ENCODE measurements at regions of chr2 and their contacts with region 1.

Region 1: GRCh38 chr2:143279672-143280071 is 150.5 kb downstream of the ARHGAP15 start:
- DNase-seq: no peak
- ATAC-seq: no peak

Region 2: GRCh38 chr2:142825861-142826260 is 453.8 kb before region 1 on chr2:
- intact Hi-C with region 1: no loop called
- DNase-seq: no peak
- ATAC-seq: no peak

Region 3: DNA sequence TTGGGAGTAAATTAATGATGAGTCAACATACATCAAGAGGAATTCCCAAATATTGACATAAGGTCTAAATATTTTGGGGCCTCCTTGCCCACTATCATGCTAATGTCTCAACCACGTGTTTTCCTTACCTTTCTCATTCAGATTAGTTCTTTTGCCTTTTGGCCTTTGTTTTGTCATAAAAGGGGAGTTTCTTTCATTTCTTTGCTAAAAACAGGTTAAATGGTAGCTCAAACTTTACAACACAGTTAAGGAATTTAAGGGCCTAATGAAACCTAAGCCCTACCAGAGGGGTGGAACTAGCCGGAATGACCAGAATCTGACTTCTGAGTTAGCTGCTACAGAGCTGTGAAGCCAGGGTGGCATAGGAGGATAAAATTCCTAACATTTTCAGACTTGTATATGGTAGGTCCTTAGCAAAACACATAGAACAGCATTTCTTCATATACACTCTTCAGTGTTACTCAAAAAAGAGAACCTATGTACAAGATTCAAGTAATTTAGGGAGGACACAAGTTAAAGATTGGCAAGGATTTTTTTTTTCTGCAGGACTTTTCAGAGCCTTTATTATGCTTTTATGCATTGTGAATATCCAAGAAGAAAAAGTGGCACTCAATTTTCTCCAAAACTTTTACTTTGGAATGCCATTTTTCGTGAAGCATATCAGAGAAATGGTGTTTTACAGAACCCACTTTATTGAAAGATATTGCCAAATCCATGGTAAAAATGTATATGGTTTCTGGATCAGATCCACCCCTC is 482.7 kb after region 1 on chr2:
- intact Hi-C with region 1: loop called (anchors 10 kb)
- DNase-seq: no peak
- ATAC-seq: no peak

Region 4: DNA sequence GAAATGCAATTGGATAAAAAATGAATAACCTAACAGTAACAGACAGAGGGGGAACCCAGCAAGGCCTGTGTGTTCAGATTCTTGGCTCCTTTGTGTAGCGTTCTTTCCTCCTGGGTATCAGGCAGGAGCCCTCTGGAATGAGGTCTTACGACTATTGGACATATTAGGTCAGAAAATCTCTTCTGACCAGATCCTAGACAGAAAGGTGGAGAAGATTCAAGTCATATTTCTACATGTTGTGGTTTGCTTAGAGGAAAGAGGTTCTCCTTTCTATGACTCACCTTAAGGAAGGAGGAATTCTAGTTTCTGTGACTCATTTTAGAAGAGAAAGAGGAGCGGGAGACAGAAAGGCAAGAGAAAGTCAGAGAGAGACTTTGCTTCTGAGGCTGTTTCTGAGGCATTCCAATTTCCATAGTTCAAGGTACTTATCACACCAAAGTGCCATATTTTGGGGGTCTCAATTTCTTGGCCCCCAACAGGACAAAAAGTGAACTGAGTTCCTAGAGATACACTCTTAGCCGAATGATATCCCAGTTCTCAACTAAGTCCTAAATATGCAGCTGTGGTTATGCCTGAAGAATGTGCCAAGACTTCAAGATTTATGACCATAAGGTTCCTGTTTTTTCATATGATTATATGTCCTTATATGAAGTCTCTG is 621.6 kb after region 1 on chr2:
- intact Hi-C with region 1: no loop called
- DNase-seq: no peak
- ATAC-seq: no peak